ENCODE measurements at regions of chr9 and their contacts with region 1.

Region 1: GRCh38 chr9:1619915-1620710 is 395.0 kb upstream of the SMARCA2 start:
- DNase-seq: no peak

Region 2: DNA sequence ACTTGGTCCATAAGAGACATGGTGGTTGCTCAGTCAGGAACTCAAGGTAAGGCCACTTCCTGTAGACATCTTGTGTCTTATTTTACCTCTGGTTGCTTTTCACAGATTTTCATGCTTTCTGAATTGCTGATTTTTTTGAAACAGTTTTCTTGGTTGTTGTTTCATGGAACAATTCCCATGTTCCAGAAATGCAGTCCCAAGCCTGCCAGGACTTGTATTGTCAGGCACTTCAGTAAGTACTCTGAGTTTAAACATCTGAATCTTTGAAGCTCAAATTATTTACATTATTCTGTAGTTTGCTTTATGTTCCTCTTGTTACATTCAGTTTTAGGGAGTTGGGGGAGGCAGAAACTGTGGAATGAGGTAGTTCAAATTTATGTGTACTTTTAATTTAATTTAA is 279.7 kb before region 1 on chr9:
- intact Hi-C with region 1: no loop called
- DNase-seq: no peak

Region 3: GRCh38 chr9:1460143-1460769 is 159.9 kb before region 1 on chr9:
- intact Hi-C with region 1: loop called (anchors 1 kb)
- DNase-seq: no peak

Region 4: GRCh38 chr9:1580215-1580614 is 39.9 kb before region 1 on chr9:
- intact Hi-C with region 1: no loop called
- DNase-seq: no peak

Region 5: GRCh38 chr9:1604942-1605560 is 15.1 kb before region 1 on chr9:
- intact Hi-C with region 1: no loop called
- DNase-seq: no peak